GM18951 (cell line): ENCODE measurements at regions of chr11 and their contacts with region 1.

Region 1: GRCh38 chr11:62855571-62856332 is 16.4 kb upstream of the WDR74 start:
- POLR2A ChIP-seq: peak; percentile 99

Region 2: DNA sequence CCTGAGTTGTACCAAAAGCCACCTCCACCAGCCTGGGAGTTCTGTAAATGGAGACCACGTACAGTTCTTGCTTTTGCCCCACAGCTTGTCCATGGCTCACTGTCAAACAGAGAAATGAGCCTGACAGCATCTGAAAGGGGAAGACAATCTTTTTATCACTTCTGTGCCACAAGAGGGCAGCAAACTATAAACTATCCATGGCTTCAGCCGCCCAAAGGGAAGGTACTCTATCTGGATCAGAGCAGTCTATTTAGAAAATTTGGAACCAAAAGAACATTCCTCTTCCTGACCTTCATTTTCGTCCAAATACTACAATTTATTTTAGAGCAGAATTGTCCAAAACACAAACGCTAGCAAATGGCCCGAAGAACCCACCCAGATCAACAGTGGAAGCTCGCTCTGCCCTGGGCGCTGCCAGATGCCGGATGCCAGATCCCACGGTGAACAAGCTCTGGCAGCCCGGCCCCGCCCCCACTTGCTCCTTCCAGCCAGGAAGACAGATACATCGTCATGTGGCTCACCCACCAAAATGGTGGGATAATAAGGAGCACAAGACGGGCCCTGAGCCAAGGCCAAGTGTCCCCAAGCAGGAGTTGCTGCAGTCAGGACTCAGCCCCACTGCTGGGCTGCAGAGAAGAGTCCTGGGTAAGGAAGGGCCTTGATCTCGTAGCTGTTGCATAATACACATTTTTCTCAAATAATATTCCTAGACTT is 460.8 kb before region 1 on chr11:
- in situ Hi-C with region 1: loop called (anchors 25 kb)
- POLR2A ChIP-seq: no peak

Region 3: GRCh38 chr11:63698976-63699733 is 843.4 kb after region 1 on chr11:
- in situ Hi-C with region 1: no loop called
- POLR2A ChIP-seq: no peak